IMR-90 (cell line): ENCODE measurements at regions of chr15 and their contacts with region 1.

Region 1: GRCh38 chr15:34367101-34368081 is at the start of gene LPCAT4:
- DNase-seq: peak; percentile 80
- ATAC-seq: peak; percentile 94
- H3K4me3 ChIP-seq: peak within 1 kb of the TSS; percentile 87
- H3K27ac ChIP-seq: peak within 1 kb of the TSS; percentile 85
- H3K4me1 ChIP-seq: 0 out of 2 replicates have a peak, but pooled peaks cover 3% of the 10 kb centered on the region
- H3K27me3 ChIP-seq: no peaks in the 10 kb centered on the region
- CTCF ChIP-seq: peak; percentile 87
- POLR2A ChIP-seq: no peak
- RAD21 ChIP-seq: peak; percentile 80
- total RNA-seq, gene LPCAT4: 3.8 and 3.9 TPM in 2 replicates

Region 2: DNA sequence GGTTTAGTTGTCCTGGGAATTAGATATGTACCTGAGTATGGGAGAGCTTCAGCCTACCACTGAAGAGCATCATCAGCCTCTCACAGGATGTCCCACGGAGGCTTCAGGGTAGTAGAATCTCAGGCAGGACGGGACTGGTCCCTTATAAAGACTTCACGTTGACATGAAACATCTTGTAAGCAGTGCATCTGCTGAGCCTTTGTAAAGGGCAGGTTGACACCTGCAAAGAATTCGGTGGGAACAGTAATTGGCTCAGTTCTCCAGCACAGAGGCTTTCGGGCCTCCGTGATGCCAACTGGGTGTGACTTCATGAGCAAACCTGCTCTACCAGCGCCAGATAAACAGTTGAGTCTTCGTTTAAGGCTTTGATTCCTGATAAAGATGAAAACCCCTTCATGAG is 301.4 kb before region 1 on chr15:
- CTCF ChIA-PET with region 1: no interaction called
- POLR2A ChIA-PET with region 1: no interaction called
- dilution Hi-C with region 1: no loop called
- in situ Hi-C with region 1: no loop called
- intact Hi-C with region 1: loop called (anchors 10 kb)
- DNase-seq: no peak
- ATAC-seq: no peak
- H3K4me3 ChIP-seq: no peak overlapping the region
- H3K27ac ChIP-seq: no peak overlapping the region
- H3K4me1 ChIP-seq: no peaks in the 10 kb centered on the region
- H3K27me3 ChIP-seq: no peaks in the 10 kb centered on the region
- CTCF ChIP-seq: no peak
- POLR2A ChIP-seq: no peak
- RAD21 ChIP-seq: no peak

Region 3: DNA sequence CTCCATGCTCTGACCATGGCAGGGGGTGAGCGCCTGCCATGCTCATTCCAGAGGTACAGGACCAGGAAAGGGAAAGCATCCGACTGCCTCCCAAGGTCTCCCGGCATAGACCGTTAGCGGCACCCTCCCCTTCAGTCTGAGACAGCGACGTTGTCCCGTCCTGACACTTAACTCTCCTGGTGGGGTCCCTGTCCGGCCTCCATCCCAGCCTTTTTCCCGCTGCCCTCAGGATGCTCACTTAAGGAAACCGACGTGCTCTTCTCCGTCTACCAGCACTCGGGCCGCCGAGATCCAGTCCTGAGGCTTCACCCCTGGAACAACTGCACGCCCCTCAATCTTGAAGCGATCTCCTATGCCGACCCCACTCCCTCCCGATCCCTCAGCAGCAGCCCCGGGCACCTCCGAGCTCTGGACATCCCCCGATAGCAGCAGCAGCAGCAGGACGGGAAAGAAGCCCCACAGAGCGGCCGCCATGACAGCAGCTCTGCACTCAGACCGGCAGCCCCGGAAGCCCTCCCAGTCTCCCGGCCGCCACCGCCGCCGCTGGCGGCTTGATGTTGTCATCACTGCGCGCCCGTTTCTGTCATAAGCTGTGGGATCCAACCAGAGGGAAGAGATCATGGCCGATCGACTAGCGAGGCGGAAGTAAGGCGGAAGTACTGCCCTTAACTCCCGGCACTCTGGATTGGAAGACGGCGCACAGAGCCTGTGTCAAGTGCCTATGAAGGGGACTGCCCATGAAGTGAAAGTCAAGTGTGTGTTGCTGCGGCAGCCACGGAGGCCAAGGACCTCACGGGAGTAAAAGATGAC is 265.8 kb before region 1 on chr15 and contains the starts of genes EMC7 and PGBD4:
- CTCF ChIA-PET with region 1: no interaction called
- POLR2A ChIA-PET with region 1: no interaction called
- dilution Hi-C with region 1: no loop called
- in situ Hi-C with region 1: loop called (anchors 10 kb)
- intact Hi-C with region 1: no loop called
- DNase-seq: peak; percentile 100
- ATAC-seq: peak; percentile 99
- H3K4me3 ChIP-seq: peak within 1 kb of the TSS; percentile 76
- H3K27ac ChIP-seq: peak within 1 kb of the TSS; percentile 88
- H3K4me1 ChIP-seq: peaks cover 4% of the 10 kb centered on the region; the same call in 1 of the 2 replicates
- H3K27me3 ChIP-seq: no peaks in the 10 kb centered on the region
- CTCF ChIP-seq: no peak
- POLR2A ChIP-seq: peak; percentile 93
- RAD21 ChIP-seq: no peak
- total RNA-seq, gene EMC7: 46.6 and 58.6 TPM in 2 replicates
- total RNA-seq, gene PGBD4: 1.3 and 1.9 TPM in 2 replicates

Region 4: GRCh38 chr15:34109797-34110663 is 257.4 kb before region 1 on chr15:
- CTCF ChIA-PET with region 1: interaction called, 4 read pairs
- POLR2A ChIA-PET with region 1: no interaction called
- dilution Hi-C with region 1: no loop called
- in situ Hi-C with region 1: loop called (anchors 10 kb)
- intact Hi-C with region 1: loop called (anchors 1 kb)
- DNase-seq: peak; percentile 60
- ATAC-seq: peak; percentile 86
- H3K4me3 ChIP-seq: no peak overlapping the region
- H3K27ac ChIP-seq: no peak overlapping the region
- H3K4me1 ChIP-seq: no peaks in the 10 kb centered on the region; the same call in 1 of the 2 replicates
- H3K27me3 ChIP-seq: no peaks in the 10 kb centered on the region
- CTCF ChIP-seq: peak; percentile 85
- POLR2A ChIP-seq: no peak
- RAD21 ChIP-seq: peak; percentile 88

Region 5: GRCh38 chr15:34161329-34161955 is 205.9 kb before region 1 on chr15:
- CTCF ChIA-PET with region 1: no interaction called
- POLR2A ChIA-PET with region 1: interaction called, 13 read pairs
- dilution Hi-C with region 1: no loop called
- in situ Hi-C with region 1: no loop called
- intact Hi-C with region 1: no loop called
- DNase-seq: peak; percentile 11
- ATAC-seq: no peak
- H3K4me3 ChIP-seq: no peak overlapping the region
- H3K27ac ChIP-seq: no peak overlapping the region
- H3K4me1 ChIP-seq: no peaks in the 10 kb centered on the region
- H3K27me3 ChIP-seq: no peaks in the 10 kb centered on the region
- CTCF ChIP-seq: no peak
- POLR2A ChIP-seq: no peak
- RAD21 ChIP-seq: no peak

Region 6: DNA sequence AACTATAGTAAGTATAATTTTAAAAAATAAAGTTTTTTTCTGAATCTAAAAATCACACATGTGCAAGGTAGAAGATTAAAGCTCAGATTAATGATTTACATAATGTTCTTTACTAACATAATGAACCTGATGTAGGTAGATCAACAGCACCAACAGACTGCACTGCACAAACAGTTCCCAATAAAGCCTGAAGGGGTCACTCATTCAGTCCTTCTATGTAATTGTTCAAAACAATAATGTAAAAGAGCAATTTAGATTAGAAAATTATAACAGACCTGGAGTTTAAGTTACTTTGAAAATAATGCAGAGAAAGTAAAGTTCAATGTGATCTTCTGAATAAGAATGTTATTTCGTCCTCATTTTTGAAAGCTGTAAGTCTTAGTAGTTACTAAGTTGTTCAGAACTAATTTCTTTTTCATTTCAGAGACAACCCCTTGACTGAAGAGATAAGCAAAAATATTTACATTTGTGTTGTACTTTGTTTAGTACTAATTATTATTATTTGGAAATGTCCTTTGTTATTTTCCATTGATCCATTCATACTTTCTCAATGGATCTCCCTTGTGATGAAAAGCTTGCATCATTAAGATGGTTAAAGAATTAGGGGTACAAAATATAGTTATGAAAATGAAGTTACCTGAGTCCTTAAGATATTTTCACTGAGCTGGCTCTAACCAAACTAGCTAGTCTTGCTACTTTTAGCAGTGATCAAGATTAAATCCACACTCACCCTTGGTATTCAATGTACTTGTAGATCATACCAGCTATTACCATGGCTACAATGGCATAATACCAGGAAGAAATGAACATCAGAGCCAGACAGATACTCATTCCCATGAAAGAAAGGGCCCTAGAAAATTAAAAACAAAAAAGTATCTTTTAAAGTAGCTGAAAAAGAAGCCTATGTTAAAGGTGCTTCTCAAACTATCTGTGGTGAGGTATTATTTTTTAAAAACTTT is 125.7 kb before region 1 on chr15:
- CTCF ChIA-PET with region 1: interaction called, 3 read pairs
- POLR2A ChIA-PET with region 1: no interaction called
- dilution Hi-C with region 1: no loop called
- in situ Hi-C with region 1: no loop called
- intact Hi-C with region 1: loop called (anchors 1 kb)
- DNase-seq: peak; percentile 51
- ATAC-seq: peak; percentile 59
- H3K4me3 ChIP-seq: no peak overlapping the region
- H3K27ac ChIP-seq: no peak overlapping the region
- H3K4me1 ChIP-seq: peaks cover 4% of the 10 kb centered on the region
- H3K27me3 ChIP-seq: no peaks in the 10 kb centered on the region
- CTCF ChIP-seq: peak; percentile 65
- POLR2A ChIP-seq: no peak
- RAD21 ChIP-seq: peak; percentile 47

Region 7: GRCh38 chr15:34342737-34343575 is 24.4 kb before region 1 on chr15 and contains the starts of genes NOP10 and NUTM1:
- CTCF ChIA-PET with region 1: interaction called, 5 read pairs
- POLR2A ChIA-PET with region 1: interaction called, 3 read pairs
- dilution Hi-C with region 1: no loop called
- in situ Hi-C with region 1: no loop called
- intact Hi-C with region 1: loop called (anchors 1 kb)
- DNase-seq: peak; percentile 93
- ATAC-seq: peak; percentile 84
- H3K4me3 ChIP-seq: peak within 1 kb of the TSS; percentile 90
- H3K27ac ChIP-seq: peak within 1 kb of the TSS; percentile 90
- H3K4me1 ChIP-seq: peaks cover 3% of the 10 kb centered on the region; the same call in 1 of the 2 replicates
- H3K27me3 ChIP-seq: no peaks in the 10 kb centered on the region
- CTCF ChIP-seq: peak; percentile 96
- POLR2A ChIP-seq: peak; percentile 75
- RAD21 ChIP-seq: peak; percentile 69
- total RNA-seq, gene NOP10: 141 and 211 TPM in 2 replicates
- total RNA-seq, gene NUTM1: not detected in 2 replicates